ENCODE measurements at regions of chr14 and their contacts with region 1.

Region 1: DNA sequence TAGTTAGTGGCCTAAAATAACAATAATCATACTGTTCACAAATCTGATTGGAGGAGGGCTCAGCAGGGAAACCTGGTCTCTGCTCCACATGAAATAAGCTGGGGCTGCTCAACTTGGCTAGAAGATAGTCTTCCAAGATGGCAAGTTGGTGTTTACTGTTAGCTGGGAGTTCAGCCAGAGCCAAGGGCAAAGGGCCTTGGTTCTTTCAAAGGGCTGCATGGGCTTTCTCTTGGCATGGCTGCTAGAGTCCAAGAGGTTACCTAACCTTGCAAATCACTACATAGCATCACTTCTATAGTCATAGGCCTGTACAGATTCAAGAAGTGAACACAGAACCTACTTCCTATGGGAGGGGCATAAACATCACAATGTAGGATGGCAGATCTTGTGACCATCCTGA is 7.1 kb downstream of the EXOC5 start:
- DNase-seq: no peak
- ATAC-seq: no peak
- H3K4me3 Mint-ChIP-seq: no peak overlapping the region
- H3K27ac Mint-ChIP-seq: no peak overlapping the region
- H3K4me1 Mint-ChIP-seq: peaks cover 23% of the 10 kb centered on the region
- H3K27me3 Mint-ChIP-seq: no peaks in the 10 kb centered on the region
- CTCF ChIP-seq: no peak

Region 2: DNA sequence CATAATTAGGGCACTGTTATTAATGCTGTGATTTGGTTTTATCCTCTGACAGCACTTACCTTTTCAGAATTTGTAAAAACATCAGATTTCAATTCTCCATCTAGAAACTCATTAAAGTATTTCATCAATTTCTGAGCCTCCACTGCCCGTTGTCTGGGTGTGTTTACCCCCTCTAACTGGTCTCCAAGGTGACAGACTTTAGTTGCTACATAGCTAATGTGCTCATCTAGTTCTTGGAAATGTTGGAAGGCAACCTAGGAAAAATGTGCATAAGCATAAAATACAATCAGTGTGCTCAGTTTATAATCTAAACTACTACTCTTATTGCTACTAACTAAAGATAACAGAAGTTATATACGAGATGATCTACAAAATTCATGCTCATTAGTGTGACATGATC is 17.5 kb before region 1 on chr14:
- CTCF ChIA-PET with region 1: no interaction called
- POLR2A ChIA-PET with region 1: no interaction called
- intact Hi-C with region 1: loop called (anchors 2 kb)
- DNase-seq: no peak
- ATAC-seq: no peak
- H3K4me3 Mint-ChIP-seq: no peak overlapping the region
- H3K27ac Mint-ChIP-seq: no peak overlapping the region
- H3K4me1 Mint-ChIP-seq: no peaks in the 10 kb centered on the region
- H3K27me3 Mint-ChIP-seq: no peaks in the 10 kb centered on the region
- CTCF ChIP-seq: no peak